ENCODE measurements at regions of chr14 and their contacts with region 1.

Region 1: GRCh38 chr14:45096218-45096617 is 12.3 kb downstream of the PRPF39 start:
- DNase-seq: peak; percentile 78
- ATAC-seq: peak; percentile 98
- H3K4me3 ChIP-seq: no peak overlapping the region
- H3K27ac ChIP-seq: no peak overlapping the region
- H3K4me1 ChIP-seq: peaks cover 23% of the 10 kb centered on the region
- H3K27me3 ChIP-seq: no peaks in the 10 kb centered on the region
- CTCF ChIP-seq: no peak

Region 2: GRCh38 chr14:44995196-44995595 is 101.0 kb before region 1 on chr14:
- CTCF ChIA-PET with region 1: no interaction called
- POLR2A ChIA-PET with region 1: interaction called, 42 read pairs
- intact Hi-C with region 1: no loop called
- DNase-seq: no peak
- ATAC-seq: no peak; the same call in 1 of the 2 replicates
- H3K4me3 ChIP-seq: no peak overlapping the region
- H3K27ac ChIP-seq: no peak overlapping the region
- H3K4me1 ChIP-seq: peaks cover 4% of the 10 kb centered on the region; the same call in 1 of the 2 replicates
- H3K27me3 ChIP-seq: no peaks in the 10 kb centered on the region
- CTCF ChIP-seq: no peak

Region 3: GRCh38 chr14:45038865-45039264 is 57.4 kb before region 1 on chr14:
- CTCF ChIA-PET with region 1: no interaction called
- POLR2A ChIA-PET with region 1: no interaction called
- intact Hi-C with region 1: no loop called
- DNase-seq: no peak
- ATAC-seq: no peak
- H3K4me3 ChIP-seq: no peak overlapping the region
- H3K27ac ChIP-seq: no peak overlapping the region
- H3K4me1 ChIP-seq: no peaks in the 10 kb centered on the region
- H3K27me3 ChIP-seq: no peaks in the 10 kb centered on the region
- CTCF ChIP-seq: no peak

Region 4: DNA sequence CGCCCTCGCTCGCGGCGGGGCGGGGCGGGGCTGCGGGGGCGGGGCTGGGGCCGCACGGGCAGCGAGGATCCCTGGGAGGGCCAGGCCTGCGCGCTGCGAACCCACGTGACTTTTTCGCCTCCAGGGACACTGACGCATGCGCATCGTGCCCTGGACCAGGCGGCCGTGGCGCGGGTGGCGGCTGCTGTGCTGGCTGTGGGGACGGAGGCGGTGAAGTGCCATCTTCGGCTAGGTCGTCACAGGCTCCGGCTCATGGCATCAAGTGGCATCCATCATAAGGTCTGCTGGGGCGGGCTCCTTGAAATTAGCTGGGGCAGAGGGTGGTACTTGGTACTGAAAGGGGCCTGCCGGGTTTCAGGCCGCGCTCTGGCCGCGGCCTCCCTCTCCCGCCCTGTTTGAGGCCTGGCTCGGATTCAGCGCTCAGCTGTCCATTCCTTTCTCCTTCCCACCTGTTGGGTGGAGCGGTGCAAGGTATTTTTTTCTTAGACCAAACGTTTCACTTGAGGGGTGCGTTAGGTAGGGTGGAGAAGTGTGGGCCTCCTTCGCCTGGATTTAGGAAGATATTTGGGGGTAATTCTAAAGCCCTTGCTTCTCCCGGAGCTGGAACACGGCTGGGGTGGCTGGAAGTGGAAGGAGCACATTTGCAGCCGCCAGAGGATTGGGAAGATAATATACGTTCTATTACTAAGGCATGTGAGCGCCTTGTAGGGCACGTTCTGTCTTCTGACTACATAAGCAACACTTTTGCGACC is 12.1 kb before region 1 on chr14 and contains the start of gene PRPF39:
- CTCF ChIA-PET with region 1: no interaction called
- POLR2A ChIA-PET with region 1: no interaction called
- intact Hi-C with region 1: loop called (anchors 1 kb)
- DNase-seq: peak; percentile 97
- ATAC-seq: peak; percentile 85
- H3K4me3 ChIP-seq: peak within 1 kb of the TSS; percentile 99
- H3K27ac ChIP-seq: peak within 1 kb of the TSS; percentile 60
- H3K4me1 ChIP-seq: peaks cover 29% of the 10 kb centered on the region; the same call in 1 of the 2 replicates
- H3K27me3 ChIP-seq: no peaks in the 10 kb centered on the region
- CTCF ChIP-seq: no peak
- total RNA-seq, gene PRPF39: 16.9 and 19.2 TPM in 2 replicates

Region 5: DNA sequence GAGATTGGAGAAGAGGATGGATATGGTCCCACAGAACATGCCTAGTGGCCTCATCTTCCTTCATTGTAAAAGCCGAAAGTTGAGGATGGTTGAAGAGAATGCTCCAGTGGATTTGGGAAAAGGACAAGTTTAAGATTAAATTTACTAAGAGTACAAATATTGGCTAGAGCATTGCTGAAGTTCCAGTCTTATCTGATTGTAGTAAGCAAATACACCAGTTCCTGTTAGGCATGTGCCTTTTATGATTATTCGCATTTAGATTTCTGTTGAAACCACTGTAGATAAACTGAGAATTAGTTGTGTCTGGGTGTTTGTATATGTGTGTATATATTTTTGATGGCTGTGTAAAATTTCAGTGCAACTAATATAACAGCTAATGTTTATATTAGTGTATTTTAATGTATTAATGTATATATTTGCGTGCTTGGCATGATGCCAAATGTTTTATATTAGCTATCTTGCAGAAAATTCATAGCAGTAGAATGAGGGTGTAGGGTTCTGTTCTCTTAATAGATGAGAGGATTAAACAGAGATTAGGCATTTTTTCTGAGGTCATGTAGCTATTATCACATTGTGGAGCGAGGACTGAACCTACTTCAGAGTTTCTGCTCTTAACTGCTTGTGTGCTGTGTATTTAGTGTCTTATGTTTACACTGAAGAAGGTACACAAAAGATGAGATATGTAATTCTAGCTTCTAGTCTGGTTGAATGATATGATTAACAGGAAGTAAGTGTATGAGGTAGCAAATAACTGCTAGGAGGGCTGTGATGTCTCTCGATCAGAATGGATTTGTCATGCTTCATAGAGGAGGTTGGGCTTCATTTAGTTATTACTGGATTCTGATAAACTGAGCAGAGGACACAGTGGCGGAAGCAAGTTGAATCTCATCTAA is 16.9 kb after region 1 on chr14:
- CTCF ChIA-PET with region 1: no interaction called
- POLR2A ChIA-PET with region 1: no interaction called
- intact Hi-C with region 1: loop called (anchors 1 kb)
- DNase-seq: peak; percentile 88
- ATAC-seq: peak; percentile 95
- H3K4me3 ChIP-seq: peak overlapping the region; percentile 6; the same call in 1 of the 2 replicates
- H3K27ac ChIP-seq: peak overlapping the region; percentile 49
- H3K4me1 ChIP-seq: peaks cover 24% of the 10 kb centered on the region
- H3K27me3 ChIP-seq: no peaks in the 10 kb centered on the region
- CTCF ChIP-seq: no peak

Region 6: DNA sequence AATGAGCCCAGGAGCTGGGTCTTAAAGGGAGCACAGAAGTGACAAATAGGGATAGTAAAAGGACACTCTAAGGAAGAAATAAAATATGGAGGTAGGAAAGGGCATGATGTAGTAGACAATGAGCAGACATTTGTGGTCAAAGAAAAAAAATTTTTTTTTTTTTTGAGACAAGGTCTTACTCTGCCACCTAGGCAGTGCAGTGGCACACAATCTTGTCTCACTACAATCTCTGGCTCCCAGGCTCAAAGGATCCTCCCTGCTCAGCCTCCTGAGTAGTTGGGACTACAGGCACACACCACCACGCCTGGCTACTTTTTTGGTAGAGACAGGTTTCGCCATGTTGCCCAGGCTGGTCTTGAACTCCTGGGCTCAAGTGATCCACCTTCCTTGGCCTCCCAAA is 29.5 kb after region 1 on chr14:
- CTCF ChIA-PET with region 1: no interaction called
- POLR2A ChIA-PET with region 1: no interaction called
- intact Hi-C with region 1: no loop called
- DNase-seq: no peak
- ATAC-seq: no peak
- H3K4me3 ChIP-seq: no peak overlapping the region
- H3K27ac ChIP-seq: no peak overlapping the region
- H3K4me1 ChIP-seq: no peaks in the 10 kb centered on the region
- H3K27me3 ChIP-seq: no peaks in the 10 kb centered on the region
- CTCF ChIP-seq: no peak